Activated CD4-positive, alpha-beta memory T cell treated with anti-CD3 and anti-CD28 coated beads for 36 hours (primary cell): ENCODE measurements at regions of chr11 and their contacts with region 1.

Region 1: GRCh38 chr11:6603287-6604080 is at the starts of genes ILK and RRP8:
- DNase-seq: peak; percentile 93
- H3K4me3 Mint-ChIP-seq: no peak within 1 kb of the TSS
- H3K27ac Mint-ChIP-seq: no peak within 1 kb of the TSS
- H3K4me1 Mint-ChIP-seq: peaks cover 26% of the 10 kb centered on the region
- H3K27me3 Mint-ChIP-seq: no peaks in the 10 kb centered on the region
- total RNA-seq, gene ILK: 89.2 to 95.8 TPM
- total RNA-seq, gene RRP8: 34.9 to 37.5 TPM

Region 2: DNA sequence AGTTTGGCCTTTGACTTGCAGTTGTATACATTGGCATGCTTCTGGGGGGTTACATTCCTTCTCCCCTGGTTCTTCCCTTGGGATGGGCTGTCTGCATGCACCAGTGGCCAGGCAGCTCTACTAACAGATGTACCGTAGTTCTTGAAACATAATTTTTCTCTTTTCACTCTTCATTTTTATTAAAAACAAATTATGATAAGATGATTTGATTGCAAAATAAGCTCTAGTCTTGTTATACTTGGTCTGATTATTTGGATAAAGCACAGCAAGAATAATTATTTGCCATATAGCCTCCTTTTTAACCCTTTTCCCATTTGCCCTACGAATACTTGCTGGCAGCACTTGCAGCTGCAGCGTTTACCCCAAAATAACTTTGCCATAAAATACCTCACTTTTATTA is 647.9 kb before region 1 on chr11:
- CTCF ChIA-PET with region 1: no interaction called
- POLR2A ChIA-PET with region 1: no interaction called
- intact Hi-C with region 1: no loop called
- DNase-seq: no peak
- H3K4me3 Mint-ChIP-seq: no peak overlapping the region
- H3K27ac Mint-ChIP-seq: no peak overlapping the region
- H3K4me1 Mint-ChIP-seq: no peaks in the 10 kb centered on the region
- H3K27me3 Mint-ChIP-seq: peaks cover 1% of the 10 kb centered on the region

Region 3: DNA sequence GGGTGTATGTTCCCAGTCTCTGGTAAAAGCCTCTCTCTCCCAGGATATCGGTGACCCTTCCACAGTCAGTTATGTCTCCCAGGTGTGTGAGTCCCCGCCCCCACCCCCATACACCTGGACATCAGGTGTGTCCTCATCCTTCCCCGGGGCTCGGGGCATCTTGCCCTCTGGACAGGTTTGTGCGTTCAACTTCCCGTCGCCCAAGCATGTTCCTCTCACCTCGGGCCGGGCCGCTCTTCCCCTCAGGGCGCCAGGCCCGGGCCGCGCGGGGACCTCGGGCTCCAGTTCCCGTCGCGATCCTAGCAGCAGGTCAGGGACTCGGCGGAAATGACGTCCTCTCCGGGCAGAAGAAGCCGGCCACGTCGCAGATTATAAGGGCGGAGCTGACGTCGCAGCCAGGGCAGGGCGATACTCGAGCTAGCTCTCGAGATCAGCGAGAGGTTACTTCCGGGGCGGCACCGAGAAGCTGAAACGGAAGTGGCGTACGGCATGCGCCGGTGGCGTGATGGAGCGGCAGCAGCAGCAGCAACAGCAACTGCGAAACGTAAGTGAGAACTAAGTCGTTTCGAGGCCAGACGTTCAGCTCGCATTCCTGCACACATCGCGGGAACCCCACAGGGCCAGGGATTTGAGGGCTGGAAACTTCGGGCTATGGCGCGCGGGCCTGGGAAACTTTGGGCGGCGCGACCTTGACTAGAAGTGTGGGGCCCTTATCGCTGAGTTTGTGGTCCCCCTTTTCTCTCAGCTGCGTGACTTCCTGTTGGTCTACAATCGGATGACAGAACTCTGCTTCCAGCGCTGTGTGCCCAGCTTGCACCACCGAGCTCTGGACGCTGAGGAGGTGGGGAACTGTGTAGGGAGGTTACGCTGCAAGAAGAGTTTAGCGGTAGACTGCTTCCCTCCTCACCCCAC is 122.2 kb before region 1 on chr11 and contains the starts of genes ARFIP2 and TIMM10B:
- CTCF ChIA-PET with region 1: no interaction called
- POLR2A ChIA-PET with region 1: interaction called, 3 read pairs
- intact Hi-C with region 1: loop called (anchors 1 kb)
- DNase-seq: peak; percentile 99
- H3K4me3 Mint-ChIP-seq: peak within 1 kb of the TSS; percentile 91
- H3K27ac Mint-ChIP-seq: peak within 1 kb of the TSS; percentile 96
- H3K4me1 Mint-ChIP-seq: peaks cover 35% of the 10 kb centered on the region
- H3K27me3 Mint-ChIP-seq: no peaks in the 10 kb centered on the region
- total RNA-seq, gene ARFIP2: 35.1 to 37.8 TPM
- total RNA-seq, gene TIMM10B: 40.2 to 41.3 TPM

Region 4: GRCh38 chr11:6619004-6619745 is 15.7 kb after region 1 on chr11 and contains the start of gene TPP1:
- CTCF ChIA-PET with region 1: interaction called, 31 read pairs
- POLR2A ChIA-PET with region 1: interaction called, 23 read pairs
- intact Hi-C with region 1: loop called (anchors 1 kb)
- DNase-seq: peak; percentile 93
- H3K4me3 Mint-ChIP-seq: no peak within 1 kb of the TSS
- H3K27ac Mint-ChIP-seq: no peak within 1 kb of the TSS
- H3K4me1 Mint-ChIP-seq: peaks cover 10% of the 10 kb centered on the region
- H3K27me3 Mint-ChIP-seq: no peaks in the 10 kb centered on the region
- total RNA-seq, gene TPP1: 53.2 to 56.6 TPM

Region 5: DNA sequence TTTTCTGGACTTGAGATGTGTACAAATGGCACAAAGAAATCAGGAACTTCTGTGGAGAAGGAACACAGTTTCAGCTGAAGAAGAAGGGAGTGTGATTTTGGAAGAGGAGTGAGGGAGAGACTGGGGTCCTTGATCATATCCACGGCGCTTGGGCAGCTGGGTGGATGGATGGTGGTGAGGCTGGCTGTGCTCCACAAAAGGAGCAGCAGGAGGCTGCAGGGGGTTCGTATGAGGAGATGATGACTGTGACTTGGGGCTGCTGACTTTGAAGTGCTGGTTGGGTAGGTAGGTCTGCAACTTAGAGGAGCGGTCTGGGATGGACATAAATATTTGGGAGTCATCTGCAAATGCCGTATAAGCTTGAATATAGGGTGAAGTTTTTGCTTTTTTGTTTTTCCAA is 53.5 kb after region 1 on chr11:
- CTCF ChIA-PET with region 1: no interaction called
- POLR2A ChIA-PET with region 1: no interaction called
- intact Hi-C with region 1: no loop called
- DNase-seq: no peak
- H3K4me3 Mint-ChIP-seq: peak overlapping the region; percentile 18
- H3K27ac Mint-ChIP-seq: no peak overlapping the region
- H3K4me1 Mint-ChIP-seq: no peaks in the 10 kb centered on the region
- H3K27me3 Mint-ChIP-seq: peaks cover 3% of the 10 kb centered on the region

Region 6: DNA sequence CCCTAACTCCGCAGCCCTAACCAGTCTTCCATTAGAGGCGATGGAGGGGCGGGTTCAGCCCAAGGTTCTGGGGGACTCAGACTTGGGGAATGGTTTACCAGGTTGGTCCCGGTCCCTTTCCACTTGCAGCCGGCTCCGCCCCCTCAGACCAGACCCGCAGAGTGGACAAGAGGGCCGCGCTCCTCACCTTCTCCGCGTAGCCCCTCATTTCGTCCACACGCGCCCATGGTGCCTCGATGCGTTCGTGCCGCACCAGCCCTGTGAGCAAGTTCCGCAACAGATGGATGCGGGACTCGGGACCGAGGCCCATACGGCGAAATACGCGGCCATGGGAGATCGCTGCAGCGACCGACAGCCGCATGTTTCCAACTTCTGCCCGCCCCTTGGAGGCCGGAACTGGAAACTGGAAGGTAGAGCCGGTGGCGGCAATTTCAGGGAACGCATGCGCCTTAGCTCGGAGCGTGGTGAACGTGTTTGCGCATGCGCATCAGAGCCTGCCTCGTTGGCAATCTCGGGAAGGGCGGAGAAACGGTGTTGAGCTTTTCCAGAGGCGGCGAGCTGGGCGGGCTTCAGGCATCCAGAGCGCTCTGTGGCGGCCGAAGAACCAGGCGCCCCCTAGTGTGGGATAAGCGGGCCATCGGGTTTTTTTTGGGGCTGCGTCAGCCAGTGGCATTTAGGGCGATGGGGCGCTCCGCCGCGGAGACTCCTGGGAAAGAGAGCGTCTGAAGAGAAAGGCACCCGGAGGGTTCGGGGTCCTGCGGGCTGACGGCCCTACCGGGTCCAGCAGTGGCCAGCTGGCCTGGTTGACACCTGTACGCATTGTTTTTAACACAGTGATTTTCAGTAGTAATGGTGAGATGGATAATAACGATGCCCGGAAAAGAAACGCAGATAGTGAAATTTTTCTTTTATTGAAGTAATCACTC is 79.7 kb after region 1 on chr11 and contains the start of gene MRPL17:
- CTCF ChIA-PET with region 1: interaction called, 36 read pairs
- POLR2A ChIA-PET with region 1: interaction called, 13 read pairs
- intact Hi-C with region 1: loop called (anchors 1 kb)
- DNase-seq: peak; percentile 100
- H3K4me3 Mint-ChIP-seq: peak within 1 kb of the TSS; percentile 99
- H3K27ac Mint-ChIP-seq: peak within 1 kb of the TSS; percentile 95
- H3K4me1 Mint-ChIP-seq: peaks cover 36% of the 10 kb centered on the region
- H3K27me3 Mint-ChIP-seq: no peaks in the 10 kb centered on the region
- total RNA-seq, gene MRPL17: 98.5 to 102 TPM

Region 7: GRCh38 chr11:6737872-6738466 is 134.5 kb after region 1 on chr11:
- CTCF ChIA-PET with region 1: no interaction called
- POLR2A ChIA-PET with region 1: no interaction called
- intact Hi-C with region 1: loop called (anchors 2 kb)
- DNase-seq: peak; percentile 67
- H3K4me3 Mint-ChIP-seq: no peak overlapping the region
- H3K27ac Mint-ChIP-seq: peak overlapping the region; percentile 53
- H3K4me1 Mint-ChIP-seq: peaks cover 89% of the 10 kb centered on the region
- H3K27me3 Mint-ChIP-seq: no peaks in the 10 kb centered on the region